ENCODE measurements at regions of chr6 and their contacts with region 1.

Region 1: DNA sequence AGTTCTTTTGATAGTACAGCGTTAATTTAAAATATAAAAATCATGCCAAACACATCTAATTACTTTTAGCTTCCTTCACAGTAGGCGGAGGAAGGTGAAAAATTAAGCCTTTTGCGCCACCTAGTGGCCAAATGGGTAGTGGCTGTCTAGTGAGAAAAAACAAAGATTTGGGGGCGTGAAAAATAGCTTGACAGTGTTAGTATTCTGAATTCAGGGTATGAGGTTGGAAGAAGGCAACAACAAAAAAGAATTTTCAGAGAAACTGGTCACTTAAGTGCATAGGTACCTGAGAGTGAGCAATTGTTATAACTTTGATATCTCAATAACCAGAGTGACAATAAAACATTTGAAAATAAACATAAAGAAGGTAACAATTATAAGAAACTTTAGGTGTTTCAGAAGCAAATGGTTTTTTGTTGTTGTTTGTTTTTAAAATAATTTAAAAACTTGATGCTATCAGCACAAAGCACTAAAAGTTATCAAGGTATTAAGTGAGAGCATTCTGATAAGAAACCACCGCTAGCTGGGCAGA is 14.3 kb downstream of the PSMB9 start:
- DNase-seq: peak; percentile 83
- H3K4me3 ChIP-seq: no peak overlapping the region
- H3K27ac ChIP-seq: no peak overlapping the region
- H3K4me1 ChIP-seq: no peaks in the 10 kb centered on the region
- H3K27me3 ChIP-seq: peaks cover 33 to 58% of the 10 kb centered on the region in 2 experiments
- CTCF ChIP-seq: peak; percentile 69 to 72
- POLR2A ChIP-seq: no peak

Region 2: DNA sequence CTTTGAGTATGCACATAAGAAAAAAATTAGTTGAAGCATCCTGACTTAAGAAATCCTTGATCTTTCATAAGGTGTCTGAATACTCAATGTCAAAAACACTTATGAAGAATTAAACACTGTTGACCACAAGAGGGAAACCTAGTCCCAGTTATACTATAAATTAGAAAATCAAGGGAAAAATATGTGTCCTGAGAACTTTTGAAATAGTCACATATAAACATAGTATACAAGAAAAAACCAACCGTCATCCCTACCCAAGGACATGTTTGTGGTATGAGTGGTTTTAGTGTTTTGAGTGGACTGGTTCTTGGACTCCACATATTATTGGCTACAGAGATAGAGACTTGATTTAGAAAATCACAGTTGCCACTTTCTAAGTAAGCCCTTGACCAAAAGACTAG is 436.3 kb before region 1 on chr6:
- CTCF ChIA-PET with region 1: interaction called, 20 read pairs
- POLR2A ChIA-PET with region 1: no interaction called
- dilution Hi-C with region 1: no loop called
- intact Hi-C with region 1: loop called (anchors 5 kb)
- DNase-seq: peak; percentile 51
- H3K4me3 ChIP-seq: no peak overlapping the region
- H3K27ac ChIP-seq: no peak overlapping the region
- H3K4me1 ChIP-seq: no peaks in the 10 kb centered on the region
- H3K27me3 ChIP-seq: peaks cover 20 to 27% of the 10 kb centered on the region in 2 experiments
- CTCF ChIP-seq: peak in 1 of 2 donors; percentile 12
- POLR2A ChIP-seq: no peak

Region 3: DNA sequence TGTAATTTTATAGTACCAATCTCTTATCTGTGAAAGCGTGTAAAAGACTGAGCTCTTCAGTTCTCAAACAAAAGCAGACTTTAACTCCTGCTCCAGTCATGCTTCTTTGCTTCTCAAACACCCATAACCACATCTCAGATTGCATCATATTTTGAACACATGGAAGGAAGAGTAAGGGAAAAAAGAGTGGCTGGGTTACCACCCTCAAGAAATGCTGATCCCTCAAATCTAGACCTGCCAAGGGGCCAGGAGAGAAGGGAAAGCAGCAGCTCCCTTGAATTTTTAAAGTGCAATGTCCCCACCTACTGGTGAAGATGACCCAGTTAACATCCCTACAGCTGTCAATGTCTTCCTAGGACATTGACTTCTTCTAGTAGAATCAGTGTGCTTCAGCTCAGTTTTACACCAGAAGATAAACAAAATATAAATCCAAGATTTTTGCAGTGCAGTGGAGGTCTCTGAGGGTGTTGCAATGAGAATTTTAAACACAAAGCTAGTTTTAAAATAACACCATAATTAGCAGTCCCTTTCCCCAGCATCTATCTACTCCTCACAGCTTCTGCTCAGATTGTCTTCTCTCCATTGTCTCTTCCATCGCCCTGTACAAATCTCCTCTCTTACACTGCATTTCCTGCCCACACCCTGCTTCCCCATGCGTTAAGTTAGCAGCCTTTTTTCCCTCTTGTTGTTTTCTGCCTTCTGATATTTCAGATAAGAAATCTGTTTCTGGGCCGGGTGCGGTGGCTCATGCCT is 82.4 kb before region 1 on chr6:
- CTCF ChIA-PET with region 1: interaction called, 44 read pairs
- POLR2A ChIA-PET with region 1: no interaction called
- dilution Hi-C with region 1: no loop called
- intact Hi-C with region 1: no loop called
- DNase-seq: peak; percentile 58
- H3K4me3 ChIP-seq: no peak overlapping the region
- H3K27ac ChIP-seq: no peak overlapping the region
- H3K4me1 ChIP-seq: no peaks in the 10 kb centered on the region
- H3K27me3 ChIP-seq: peaks cover 8 to 50% of the 10 kb centered on the region in 2 experiments
- CTCF ChIP-seq: peak; percentile 49 to 51
- POLR2A ChIP-seq: no peak

Region 4: GRCh38 chr6:32814145-32814544 is 54.2 kb before region 1 on chr6:
- CTCF ChIA-PET with region 1: interaction called, 13 read pairs
- POLR2A ChIA-PET with region 1: no interaction called
- dilution Hi-C with region 1: no loop called
- intact Hi-C with region 1: no loop called
- DNase-seq: no peak
- H3K4me3 ChIP-seq: no peak overlapping the region
- H3K27ac ChIP-seq: no peak overlapping the region
- H3K4me1 ChIP-seq: no peaks in the 10 kb centered on the region
- H3K27me3 ChIP-seq: peaks cover 8 to 15% of the 10 kb centered on the region in 2 experiments
- CTCF ChIP-seq: no peak
- POLR2A ChIP-seq: no peak

Region 5: DNA sequence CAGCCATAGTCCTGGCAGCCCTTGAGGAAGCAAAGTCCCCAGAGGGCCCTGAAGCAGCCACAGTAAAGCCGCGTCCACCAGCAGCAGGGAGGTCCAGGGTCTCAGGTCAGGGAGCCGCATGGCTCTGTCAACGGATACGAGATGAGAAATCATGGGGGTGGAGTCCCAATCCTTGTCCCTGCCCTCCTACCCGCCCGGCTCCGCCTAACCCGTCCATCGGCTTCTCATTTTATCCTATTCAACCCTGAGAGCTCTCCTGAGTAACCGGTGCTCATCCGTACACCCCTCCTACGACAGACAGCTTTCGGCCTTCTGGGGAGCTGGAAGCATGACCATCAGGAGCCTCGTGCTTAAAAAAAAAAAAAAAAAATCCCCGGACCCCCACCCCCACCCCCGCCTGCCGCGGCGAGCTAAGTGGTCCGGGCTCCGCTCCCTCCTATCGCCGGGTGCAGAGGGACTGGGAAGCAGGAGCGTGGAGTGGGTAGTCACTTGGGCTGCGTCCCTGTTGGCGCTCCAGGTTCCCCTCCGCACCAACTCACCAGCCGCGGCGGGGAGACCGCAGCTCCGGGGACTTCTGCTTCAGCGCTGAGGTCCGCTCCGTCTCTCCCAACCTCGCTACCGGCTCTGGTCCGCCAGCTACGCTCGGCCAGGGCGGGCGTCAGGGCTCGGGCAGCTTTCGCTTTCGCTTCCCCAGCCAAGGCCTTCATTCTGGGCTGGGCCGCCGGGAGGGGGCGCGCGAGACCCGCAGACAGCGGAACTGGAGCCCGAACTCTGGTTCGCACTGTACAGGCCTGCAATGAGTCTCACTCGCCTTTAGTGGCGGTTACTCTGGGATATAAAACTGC is 30.0 kb before region 1 on chr6 and contains the start of gene TAP2:
- CTCF ChIA-PET with region 1: interaction called, 397 read pairs
- POLR2A ChIA-PET with region 1: interaction called, 8 read pairs
- dilution Hi-C with region 1: no loop called
- intact Hi-C with region 1: loop called (anchors 1 kb)
- DNase-seq: peak; percentile 94
- H3K4me3 ChIP-seq: peak within 1 kb of the TSS; percentile 30 to 89 (median 70)
- H3K27ac ChIP-seq: peak within 1 kb of the TSS; percentile 54
- H3K4me1 ChIP-seq: peaks cover 9% of the 10 kb centered on the region
- H3K27me3 ChIP-seq: no peaks in the 10 kb centered on the region
- CTCF ChIP-seq: peak; percentile 92 to 99
- POLR2A ChIP-seq: peak; percentile 64
- total RNA-seq, gene TAP2: 49.7 and 57.8 TPM in 2 replicates

Region 6: DNA sequence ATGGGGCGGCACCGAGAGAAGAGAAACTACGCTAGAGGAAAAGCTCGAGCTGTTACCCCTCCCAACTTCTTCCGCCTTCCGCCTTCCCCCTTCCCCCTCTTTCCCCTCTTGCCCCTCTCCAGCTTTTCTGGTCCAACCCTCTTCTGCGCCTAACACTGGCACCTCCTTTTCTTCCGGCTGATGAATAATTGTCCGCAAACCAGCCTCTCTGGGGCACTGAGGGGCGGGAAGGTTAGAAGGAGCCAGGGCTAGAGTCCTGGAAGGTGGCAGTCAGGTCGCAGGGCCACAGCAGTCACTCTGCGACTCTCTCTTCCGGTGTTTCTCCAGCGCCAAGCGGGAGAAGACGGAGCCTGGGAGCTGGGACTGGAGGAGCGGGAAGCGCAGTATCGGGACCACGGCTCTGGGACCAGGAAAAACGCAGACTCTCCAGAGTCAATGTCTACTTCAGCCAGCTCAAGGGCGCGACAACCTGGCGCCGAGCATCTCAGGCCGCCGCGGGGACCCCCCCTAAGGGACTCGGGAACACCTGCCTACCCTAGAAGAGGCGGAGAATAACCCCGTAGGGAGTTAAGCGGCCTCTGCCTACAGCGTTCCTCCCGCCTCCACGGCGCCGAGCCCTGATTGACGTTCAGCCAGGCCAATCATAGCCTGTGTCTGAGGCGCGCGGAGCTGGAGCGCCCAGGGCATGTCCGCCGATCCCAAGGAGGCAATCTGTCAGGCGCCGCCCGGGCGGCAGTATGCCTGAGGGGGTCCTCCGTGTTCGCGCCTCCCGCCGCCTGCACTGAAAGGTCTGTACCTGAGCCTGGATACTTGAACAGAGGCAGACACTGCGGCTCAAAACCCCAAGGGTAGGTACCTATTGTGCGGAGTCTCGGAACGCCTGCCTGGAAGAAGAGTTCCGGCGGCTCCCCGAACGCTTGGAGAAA is 26.0 kb after region 1 on chr6:
- CTCF ChIA-PET with region 1: interaction called, 15 read pairs
- POLR2A ChIA-PET with region 1: no interaction called
- dilution Hi-C with region 1: no loop called
- intact Hi-C with region 1: no loop called
- DNase-seq: peak; percentile 98
- H3K4me3 ChIP-seq: peak overlapping the region; percentile 24 to 67 (median 61)
- H3K27ac ChIP-seq: peak overlapping the region; percentile 45
- H3K4me1 ChIP-seq: peaks cover 17% of the 10 kb centered on the region
- H3K27me3 ChIP-seq: peaks cover 0 to 1% of the 10 kb centered on the region in 2 experiments
- CTCF ChIP-seq: no peak
- POLR2A ChIP-seq: peak; percentile 72

Measured in endothelial cell of umbilical vein (primary cell).